AG04450 (cell line): ENCODE measurements at regions of chr9 and their contacts with region 1.

Region 1: DNA sequence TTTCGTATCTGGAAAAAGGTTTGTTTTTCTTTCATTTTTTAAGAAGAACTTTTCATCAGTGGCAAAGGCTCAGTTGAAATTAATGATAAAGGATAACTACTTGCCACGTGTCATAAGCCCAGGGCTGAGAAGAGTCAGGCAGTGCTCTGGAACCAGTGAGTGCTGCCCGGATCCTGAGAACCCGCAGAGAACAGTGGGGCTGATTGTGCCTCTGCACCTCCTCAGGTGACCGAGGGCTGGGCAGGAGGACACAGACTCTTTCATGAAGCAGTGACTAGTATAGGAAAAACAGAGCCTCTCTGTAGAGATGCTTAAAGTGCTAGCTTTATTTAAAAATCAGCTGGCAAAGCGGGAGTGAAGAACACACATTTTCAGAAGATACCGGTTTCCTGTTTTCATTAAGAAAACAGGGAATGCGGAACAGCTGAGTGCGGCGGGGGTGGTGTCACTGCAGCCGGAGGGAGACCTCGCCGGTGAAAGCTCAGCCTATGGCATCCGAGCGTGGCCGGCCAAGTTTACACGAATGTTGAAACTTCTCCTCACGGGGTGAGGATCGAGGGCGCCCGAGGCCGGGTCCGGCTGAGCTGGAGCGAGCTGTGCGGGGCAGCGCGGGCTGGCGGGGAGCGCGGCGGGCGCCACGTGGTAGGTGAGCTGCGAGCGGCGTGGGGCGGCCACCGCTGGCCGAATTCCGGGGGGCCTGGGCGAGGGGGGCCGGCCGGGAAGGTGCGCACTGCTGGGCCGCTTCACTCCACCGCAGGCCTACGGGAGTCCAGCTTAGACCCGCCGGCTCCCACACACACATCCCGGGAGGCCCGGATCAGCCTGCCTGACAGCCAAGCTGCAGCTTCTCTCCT is 134.7 kb upstream of the DMRT1 start:
- DNase-seq: no peak
- H3K4me3 ChIP-seq: peak overlapping the region; percentile 64
- H3K27ac ChIP-seq: peak overlapping the region; percentile 90
- H3K27me3 ChIP-seq: no peaks in the 10 kb centered on the region
- CTCF ChIP-seq: no peak

Region 2: DNA sequence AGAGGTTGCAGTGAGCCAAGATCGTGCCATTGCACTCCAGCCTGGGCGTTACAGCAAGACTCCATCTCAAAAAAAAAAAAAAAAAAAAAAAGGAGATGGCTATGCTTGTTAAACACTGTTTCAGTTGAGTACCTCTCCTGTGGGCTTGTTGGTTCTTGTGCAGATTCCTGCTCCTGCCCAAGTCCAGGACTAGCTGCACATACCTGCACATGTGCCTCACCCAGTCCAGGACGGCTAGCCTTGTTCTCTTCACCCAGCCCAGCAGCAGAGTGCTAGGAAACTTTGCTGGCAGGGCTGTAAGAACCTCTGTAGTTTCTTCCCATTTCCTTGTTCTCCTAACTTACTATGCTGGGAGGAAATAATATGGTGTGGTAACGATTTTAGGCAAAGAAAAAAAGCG is 99.4 kb before region 1 on chr9:
- CTCF ChIA-PET with region 1: no interaction called
- POLR2A ChIA-PET with region 1: no interaction called
- DNase-seq: no peak
- H3K4me3 ChIP-seq: no peak overlapping the region
- H3K27ac ChIP-seq: no peak overlapping the region
- H3K27me3 ChIP-seq: no peaks in the 10 kb centered on the region
- CTCF ChIP-seq: no peak

Region 3: DNA sequence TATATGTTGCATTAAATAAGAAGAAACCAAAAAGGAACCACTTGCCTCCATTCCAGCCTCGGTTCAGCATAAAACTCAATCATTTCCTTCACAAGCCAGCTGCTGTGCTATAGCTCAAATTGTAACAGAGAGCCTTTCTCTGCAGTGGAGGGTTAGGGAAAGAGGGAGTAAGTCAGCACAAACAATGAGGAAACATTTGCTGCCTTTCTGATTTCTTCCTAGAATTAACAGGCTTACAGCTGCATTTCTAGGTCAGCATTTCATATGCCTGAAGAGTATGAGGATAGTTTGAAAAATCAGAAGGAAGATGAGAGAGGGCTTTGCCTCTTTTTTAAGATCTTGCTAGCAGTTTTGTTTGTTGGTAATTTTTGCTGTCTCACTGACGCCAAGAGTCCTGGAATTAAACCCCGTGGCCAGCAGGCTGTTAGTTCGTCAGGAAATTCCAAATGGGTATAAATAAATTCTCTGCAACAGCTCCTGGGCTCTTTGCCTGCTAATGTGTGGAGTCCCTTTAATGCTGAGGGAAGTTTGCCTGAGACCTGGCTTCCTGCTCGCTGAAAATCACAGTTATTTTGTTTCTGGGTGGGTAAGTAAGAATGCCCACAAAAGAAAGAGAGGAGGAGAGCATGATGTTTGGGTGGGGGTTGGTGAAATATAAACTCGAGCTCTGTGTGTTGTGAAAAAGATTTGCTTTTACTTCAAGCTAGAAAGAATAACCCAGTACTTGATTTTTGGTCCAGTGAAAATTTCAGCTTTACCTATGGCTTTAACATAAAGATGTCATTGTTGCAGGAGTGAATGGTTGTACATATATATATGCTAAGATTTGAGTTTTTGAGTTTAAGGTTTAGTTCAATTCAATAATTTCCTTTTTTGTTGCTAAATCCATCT is 13.4 kb before region 1 on chr9:
- CTCF ChIA-PET with region 1: interaction called, 9 read pairs
- POLR2A ChIA-PET with region 1: interaction called, 19 read pairs
- DNase-seq: peak; percentile 57
- H3K4me3 ChIP-seq: peak overlapping the region; percentile 49
- H3K27ac ChIP-seq: peak overlapping the region; percentile 88
- H3K27me3 ChIP-seq: no peaks in the 10 kb centered on the region
- CTCF ChIP-seq: 0 out of 2 replicates have a peak, but pooled peaks have one; percentile 14

Region 4: GRCh38 chr9:726059-726458 is 19.2 kb after region 1 on chr9:
- CTCF ChIA-PET with region 1: no interaction called
- POLR2A ChIA-PET with region 1: interaction called, 12 read pairs
- DNase-seq: no peak
- H3K4me3 ChIP-seq: no peak overlapping the region
- H3K27ac ChIP-seq: no peak overlapping the region
- H3K27me3 ChIP-seq: no peaks in the 10 kb centered on the region
- CTCF ChIP-seq: no peak

Region 5: GRCh38 chr9:1261879-1262766 is 555.3 kb after region 1 on chr9:
- CTCF ChIA-PET with region 1: no interaction called
- POLR2A ChIA-PET with region 1: no interaction called
- DNase-seq: no peak
- H3K4me3 ChIP-seq: no peak overlapping the region
- H3K27ac ChIP-seq: no peak overlapping the region
- H3K27me3 ChIP-seq: no peaks in the 10 kb centered on the region
- CTCF ChIP-seq: no peak